Activated CD8-positive, alpha-beta T cell treated with anti-CD3 and anti-CD28 coated beads for 36 hours (primary cell): ENCODE measurements at regions of chr13 and their contacts with region 1.

Region 1: GRCh38 chr13:41456768-41457588 is at the start of gene RGCC:
- DNase-seq: peak; percentile 97
- ATAC-seq: peak; percentile 78
- H3K4me3 Mint-ChIP-seq: peak within 1 kb of the TSS; percentile 80
- H3K27ac Mint-ChIP-seq: peak within 1 kb of the TSS; percentile 96
- H3K4me1 Mint-ChIP-seq: peaks cover 42% of the 10 kb centered on the region
- H3K27me3 Mint-ChIP-seq: peaks cover 4% of the 10 kb centered on the region
- CTCF ChIP-seq: no peak
- total RNA-seq, gene RGCC: 135 to 143 TPM

Region 2: GRCh38 chr13:41159174-41159573 is 297.8 kb before region 1 on chr13:
- CTCF ChIA-PET with region 1: no interaction called
- POLR2A ChIA-PET with region 1: no interaction called
- intact Hi-C with region 1: no loop called
- DNase-seq: no peak
- ATAC-seq: no peak
- H3K4me3 Mint-ChIP-seq: no peak overlapping the region
- H3K27ac Mint-ChIP-seq: no peak overlapping the region
- H3K4me1 Mint-ChIP-seq: peaks cover 5% of the 10 kb centered on the region
- H3K27me3 Mint-ChIP-seq: no peaks in the 10 kb centered on the region
- CTCF ChIP-seq: no peak

Region 3: DNA sequence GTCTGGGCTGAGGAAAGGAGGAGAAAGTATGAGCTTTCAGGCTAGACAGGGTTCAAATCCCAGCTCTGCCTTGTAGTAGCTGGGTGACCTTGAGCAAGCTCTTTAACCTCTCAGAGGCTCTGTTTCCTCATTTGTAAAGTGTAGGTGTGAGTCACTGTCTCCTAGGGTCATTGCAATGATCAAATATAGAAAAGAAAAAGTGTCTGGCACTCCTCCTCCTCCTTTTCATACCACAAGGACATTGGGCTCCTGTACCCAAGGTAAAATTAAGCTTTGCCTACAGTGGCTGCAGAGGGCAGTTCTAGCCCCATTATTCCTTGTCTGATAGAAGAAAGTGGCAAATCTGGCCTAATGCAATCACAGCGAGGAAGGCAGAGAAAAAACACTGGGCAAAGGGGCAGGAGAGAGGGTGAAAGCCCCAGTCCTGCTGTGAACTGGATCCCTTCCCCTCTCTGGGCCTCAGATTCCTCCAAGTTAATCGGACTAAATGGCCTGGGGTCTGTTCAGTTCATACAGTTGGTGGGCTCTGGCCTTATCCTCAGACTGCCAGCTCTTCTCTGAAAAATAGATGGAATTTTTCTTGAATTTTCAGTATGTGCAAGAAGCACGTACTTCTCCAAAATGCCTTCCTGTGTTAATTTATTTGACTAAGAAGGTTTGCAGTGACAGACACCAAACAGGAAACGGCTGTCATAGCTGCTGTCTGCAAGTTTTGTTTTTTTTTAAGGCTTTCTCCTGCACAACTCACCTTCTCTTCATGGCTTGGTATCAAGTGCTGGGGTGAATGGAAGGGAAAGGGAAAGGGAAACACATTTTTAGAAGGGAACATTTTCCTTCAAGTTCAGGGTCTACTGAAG is 35.7 kb after region 1 on chr13:
- CTCF ChIA-PET with region 1: interaction called, 66 read pairs
- POLR2A ChIA-PET with region 1: interaction called, 16 read pairs
- intact Hi-C with region 1: no loop called
- DNase-seq: peak; percentile 39
- ATAC-seq: peak; percentile 72
- H3K4me3 Mint-ChIP-seq: peak overlapping the region; percentile 59
- H3K27ac Mint-ChIP-seq: peak overlapping the region; percentile 97
- H3K4me1 Mint-ChIP-seq: peaks cover 83% of the 10 kb centered on the region
- H3K27me3 Mint-ChIP-seq: no peaks in the 10 kb centered on the region
- CTCF ChIP-seq: no peak

Region 4: DNA sequence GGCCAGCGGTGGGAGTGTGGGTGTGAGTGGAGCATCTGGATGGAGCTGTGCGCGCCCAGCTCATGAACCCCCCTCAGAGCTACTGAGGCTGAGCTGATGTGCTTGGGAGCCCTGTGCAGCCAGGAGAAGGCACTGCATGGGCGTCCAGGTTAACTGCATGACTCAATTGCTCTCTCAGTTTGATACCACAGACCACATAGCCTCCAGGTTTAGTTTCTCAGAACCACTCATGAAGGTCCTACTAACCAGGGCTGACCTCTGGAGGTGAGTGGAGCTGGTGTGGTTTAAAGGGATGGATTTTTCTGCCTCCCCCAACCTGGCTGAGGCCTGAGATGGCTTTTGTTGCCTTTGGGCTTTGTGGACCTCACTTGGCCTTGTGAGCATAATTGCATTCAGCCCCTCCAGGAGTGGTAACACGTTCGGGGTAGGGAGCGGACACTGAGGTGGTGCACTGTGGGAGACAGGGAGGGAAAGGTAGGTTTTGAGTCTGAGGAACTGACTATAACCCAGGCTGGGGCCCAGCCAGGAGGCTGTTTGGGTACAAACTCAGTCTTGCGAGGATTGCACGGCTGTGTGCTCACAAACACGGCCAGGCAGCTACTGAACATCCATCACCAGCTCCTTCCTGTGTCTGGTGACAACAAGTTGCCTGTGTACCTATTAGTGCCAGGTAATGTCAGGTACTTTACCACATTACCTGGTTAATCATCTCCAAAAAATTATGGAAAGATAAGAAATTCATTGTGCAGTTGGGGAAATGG is 97.8 kb after region 1 on chr13:
- CTCF ChIA-PET with region 1: interaction called, 20 read pairs
- POLR2A ChIA-PET with region 1: no interaction called
- intact Hi-C with region 1: loop called (anchors 5 kb)
- DNase-seq: peak; percentile 75
- ATAC-seq: peak; percentile 98
- H3K4me3 Mint-ChIP-seq: no peak overlapping the region
- H3K27ac Mint-ChIP-seq: no peak overlapping the region
- H3K4me1 Mint-ChIP-seq: peaks cover 11% of the 10 kb centered on the region
- H3K27me3 Mint-ChIP-seq: no peaks in the 10 kb centered on the region
- CTCF ChIP-seq: no peak

Region 5: GRCh38 chr13:41561170-41561569 is 104.2 kb after region 1 on chr13:
- CTCF ChIA-PET with region 1: interaction called, 20 read pairs
- POLR2A ChIA-PET with region 1: no interaction called
- intact Hi-C with region 1: no loop called
- DNase-seq: no peak
- ATAC-seq: no peak
- H3K4me3 Mint-ChIP-seq: no peak overlapping the region
- H3K27ac Mint-ChIP-seq: no peak overlapping the region
- H3K4me1 Mint-ChIP-seq: peaks cover 13% of the 10 kb centered on the region
- H3K27me3 Mint-ChIP-seq: no peaks in the 10 kb centered on the region
- CTCF ChIP-seq: no peak

Region 6: DNA sequence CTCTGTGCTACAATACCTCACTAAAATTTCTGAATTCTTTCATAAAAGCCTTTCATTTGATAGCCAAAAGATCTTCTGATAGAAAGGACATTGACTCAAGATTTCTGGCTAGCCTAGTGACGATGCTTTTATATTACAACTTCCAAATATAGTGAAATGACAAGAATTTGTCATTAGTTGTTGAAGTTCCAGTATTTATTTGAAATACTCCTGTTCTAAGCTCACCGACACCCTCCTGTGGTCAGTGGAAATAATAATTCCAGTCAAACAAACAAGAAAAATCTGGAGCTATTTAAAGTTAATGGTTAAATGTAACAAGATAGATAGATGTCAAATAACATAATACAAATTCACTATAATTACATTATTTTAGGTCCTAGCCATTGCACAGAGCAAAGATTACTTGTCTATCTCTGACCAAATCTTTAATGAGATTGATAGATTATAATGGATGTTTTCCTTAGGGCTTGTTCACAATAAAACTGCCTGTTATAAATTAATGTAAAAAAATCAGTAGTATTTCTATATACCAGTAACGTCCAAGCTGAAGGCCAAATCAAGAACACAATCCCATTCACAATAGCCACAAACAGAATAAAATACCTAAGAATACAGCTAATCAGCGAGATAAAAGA is 195.9 kb after region 1 on chr13:
- CTCF ChIA-PET with region 1: interaction called, 27 read pairs
- POLR2A ChIA-PET with region 1: no interaction called
- intact Hi-C with region 1: loop called (anchors 5 kb)
- DNase-seq: peak; percentile 55
- ATAC-seq: no peak
- H3K4me3 Mint-ChIP-seq: no peak overlapping the region
- H3K27ac Mint-ChIP-seq: no peak overlapping the region
- H3K4me1 Mint-ChIP-seq: peaks cover 15% of the 10 kb centered on the region
- H3K27me3 Mint-ChIP-seq: no peaks in the 10 kb centered on the region
- CTCF ChIP-seq: peak; percentile 60

Region 7: GRCh38 chr13:41668130-41668757 is 211.3 kb after region 1 on chr13:
- CTCF ChIA-PET with region 1: interaction called, 12 read pairs
- POLR2A ChIA-PET with region 1: no interaction called
- intact Hi-C with region 1: no loop called
- DNase-seq: peak; percentile 45
- ATAC-seq: peak; percentile 90
- H3K4me3 Mint-ChIP-seq: no peak overlapping the region
- H3K27ac Mint-ChIP-seq: no peak overlapping the region
- H3K4me1 Mint-ChIP-seq: no peaks in the 10 kb centered on the region
- H3K27me3 Mint-ChIP-seq: no peaks in the 10 kb centered on the region
- CTCF ChIP-seq: peak; percentile 73